ENCODE measurements at regions of chr18 and their contacts with region 1.

Region 1: DNA sequence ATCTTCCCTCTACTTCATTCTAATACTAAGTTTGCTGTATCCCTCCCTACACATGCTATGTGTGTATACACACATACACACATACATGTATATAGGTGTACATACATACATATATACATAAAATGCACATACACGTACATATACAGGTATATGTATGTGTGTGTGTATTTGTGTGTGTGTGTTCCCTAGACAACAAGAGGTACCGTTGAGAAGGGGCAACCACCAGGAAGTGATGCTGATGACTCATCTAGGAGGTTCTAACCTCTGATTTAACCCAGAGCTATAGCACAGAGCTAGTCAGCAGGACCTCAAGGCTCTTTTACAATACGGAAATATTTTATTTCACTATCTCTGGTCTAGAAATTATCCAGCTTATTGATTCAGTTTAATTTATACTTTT is 139.2 kb downstream of the LAMA3 start:
- DNase-seq: peak; percentile 40 to 86
- ATAC-seq: peak; percentile 97 to 99 (median 98)
- H3K4me3 ChIP-seq: no peak overlapping the region
- H3K4me3 Mint-ChIP-seq: peak overlapping the region; percentile 22
- H3K27ac ChIP-seq: peak overlapping the region; percentile 67
- H3K27ac Mint-ChIP-seq: peak overlapping the region in 1 of 2 donors; percentile 90
- H3K4me1 ChIP-seq: no peaks in the 10 kb centered on the region
- H3K4me1 Mint-ChIP-seq: peaks cover 6 to 8% of the 10 kb centered on the region in 2 donors
- H3K27me3 ChIP-seq: no peaks in the 10 kb centered on the region
- H3K27me3 Mint-ChIP-seq: peaks cover 3 to 7% of the 10 kb centered on the region in 2 donors
- CTCF ChIP-seq: no peak

Region 2: DNA sequence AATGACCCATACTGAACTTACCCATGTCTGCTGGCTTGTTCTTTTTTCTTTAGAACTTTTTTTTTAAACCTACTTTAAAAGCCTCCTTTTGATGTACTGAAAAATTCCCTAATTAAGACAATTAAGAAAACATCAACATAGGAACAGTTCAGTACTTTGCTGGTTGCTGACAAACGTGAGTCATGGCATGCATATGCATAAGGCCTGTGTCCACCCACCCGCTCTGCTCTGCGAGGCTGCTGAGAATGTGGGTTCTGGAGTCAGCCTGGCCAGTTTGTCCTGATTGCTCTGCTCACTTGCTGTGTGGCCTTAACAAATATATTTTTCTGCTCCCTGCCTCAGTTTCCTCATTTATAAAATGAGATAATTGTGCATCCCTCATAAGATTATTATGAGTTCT is 111.9 kb before region 1 on chr18:
- intact Hi-C with region 1: no loop called
- DNase-seq: no peak
- ATAC-seq: no peak
- H3K4me3 ChIP-seq: no peak overlapping the region
- H3K4me3 Mint-ChIP-seq: no peak overlapping the region
- H3K27ac ChIP-seq: no peak overlapping the region
- H3K27ac Mint-ChIP-seq: no peak overlapping the region
- H3K4me1 ChIP-seq: peaks cover 6% of the 10 kb centered on the region
- H3K4me1 Mint-ChIP-seq: peaks cover 14% of the 10 kb centered on the region in 2 donors
- H3K27me3 ChIP-seq: no peaks in the 10 kb centered on the region
- H3K27me3 Mint-ChIP-seq: peaks cover under 1 to 6% of the 10 kb centered on the region in 2 donors
- CTCF ChIP-seq: no peak

Region 3: DNA sequence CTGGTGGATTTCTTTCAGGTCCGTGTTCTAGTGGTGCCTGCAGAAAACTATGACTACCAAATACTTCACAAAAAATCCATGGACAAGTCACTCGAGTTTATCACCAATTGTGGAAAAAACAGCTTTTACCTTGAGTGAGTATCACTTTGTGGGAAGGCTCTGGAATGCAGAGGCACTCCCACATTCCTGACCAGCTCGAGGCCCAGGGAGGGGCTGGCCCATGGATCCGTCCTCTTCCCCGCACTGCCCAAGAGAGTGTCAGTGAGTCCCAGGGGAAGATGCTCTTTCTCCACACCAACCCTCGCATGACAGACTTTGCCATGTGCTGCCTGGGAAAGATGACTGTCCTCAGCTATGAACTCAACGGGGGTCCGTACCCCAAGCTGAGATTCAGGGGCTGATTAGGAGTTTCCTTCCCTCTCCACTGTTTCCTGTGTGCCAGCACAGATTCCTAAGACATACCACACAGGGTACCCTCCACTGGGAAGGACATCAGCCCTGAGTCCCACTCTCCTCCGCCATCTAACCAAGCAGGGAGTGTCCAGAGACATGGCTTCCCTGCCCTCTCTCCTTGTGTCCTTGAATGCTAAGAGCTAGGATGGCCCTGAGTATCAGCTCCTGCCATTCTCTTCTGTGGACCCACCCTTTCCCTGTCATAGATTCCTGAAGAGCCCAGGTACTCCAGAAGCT is 16.7 kb after region 1 on chr18:
- intact Hi-C with region 1: no loop called
- DNase-seq: no peak
- ATAC-seq: no peak
- H3K4me3 ChIP-seq: no peak overlapping the region
- H3K4me3 Mint-ChIP-seq: no peak overlapping the region
- H3K27ac ChIP-seq: no peak overlapping the region
- H3K27ac Mint-ChIP-seq: no peak overlapping the region
- H3K4me1 ChIP-seq: no peaks in the 10 kb centered on the region
- H3K4me1 Mint-ChIP-seq: no peaks in the 10 kb centered on the region
- H3K27me3 ChIP-seq: no peaks in the 10 kb centered on the region
- H3K27me3 Mint-ChIP-seq: peaks cover 0 to 12% of the 10 kb centered on the region in 2 donors
- CTCF ChIP-seq: no peak

Region 4: GRCh38 chr18:23861805-23862470 is 33.5 kb after region 1 on chr18:
- intact Hi-C with region 1: loop called (anchors 5 kb)
- DNase-seq: no peak
- ATAC-seq: no peak
- H3K4me3 ChIP-seq: no peak overlapping the region
- H3K4me3 Mint-ChIP-seq: no peak overlapping the region
- H3K27ac ChIP-seq: peak overlapping the region; percentile 31
- H3K27ac Mint-ChIP-seq: peak overlapping the region; percentile 84 to 87
- H3K4me1 ChIP-seq: peaks cover 40% of the 10 kb centered on the region
- H3K4me1 Mint-ChIP-seq: peaks cover 47 to 51% of the 10 kb centered on the region in 2 donors
- H3K27me3 ChIP-seq: no peaks in the 10 kb centered on the region
- H3K27me3 Mint-ChIP-seq: no peaks in the 10 kb centered on the region
- CTCF ChIP-seq: no peak

Region 5: GRCh38 chr18:23871410-23871809 is 43.0 kb after region 1 on chr18:
- intact Hi-C with region 1: loop called (anchors 2 kb)
- DNase-seq: peak; percentile 61 to 89
- ATAC-seq: peak; percentile 96 to 99 (median 98)
- H3K4me3 ChIP-seq: no peak overlapping the region
- H3K4me3 Mint-ChIP-seq: peak overlapping the region; percentile 83
- H3K27ac ChIP-seq: peak overlapping the region; percentile 22
- H3K27ac Mint-ChIP-seq: peak overlapping the region; percentile 88 to 89
- H3K4me1 ChIP-seq: peaks cover 34% of the 10 kb centered on the region
- H3K4me1 Mint-ChIP-seq: peaks cover 42 to 48% of the 10 kb centered on the region in 2 donors
- H3K27me3 ChIP-seq: no peaks in the 10 kb centered on the region
- H3K27me3 Mint-ChIP-seq: peaks cover 0 to 2% of the 10 kb centered on the region in 2 donors
- CTCF ChIP-seq: no peak

Region 6: DNA sequence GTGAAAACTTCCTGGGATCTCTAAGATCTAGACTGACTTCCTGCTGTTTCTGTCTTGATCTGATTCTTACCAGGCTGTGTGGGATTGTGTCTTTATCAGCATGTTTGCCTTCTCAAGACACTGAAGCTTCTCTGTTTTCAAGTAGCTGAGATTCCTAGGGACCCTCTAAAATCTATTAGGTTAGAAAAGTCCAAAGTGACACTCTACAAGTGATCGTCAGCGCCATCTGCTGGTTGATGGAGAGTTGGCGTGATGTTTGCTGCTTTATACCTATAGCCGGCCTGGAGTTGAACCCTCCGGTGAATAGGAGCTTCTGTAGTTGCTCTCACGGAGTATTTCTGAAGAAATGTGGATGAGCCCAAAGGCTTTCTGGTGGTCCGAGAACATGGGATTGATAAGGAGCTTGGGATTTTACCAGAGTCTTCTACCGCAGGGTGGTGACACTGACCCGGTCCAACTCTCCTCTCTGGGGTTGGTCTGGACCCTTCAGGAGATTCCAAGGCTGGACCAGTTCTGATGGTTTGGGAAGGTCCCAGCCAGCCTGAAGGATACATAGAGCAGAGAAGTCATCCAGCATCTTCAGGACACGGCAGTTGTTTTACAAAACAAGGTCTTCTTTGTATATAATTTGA is 90.1 kb after region 1 on chr18:
- intact Hi-C with region 1: loop called (anchors 2 kb)
- DNase-seq: peak; percentile 75 to 90
- ATAC-seq: peak; percentile 72 to 91 (median 87)
- H3K4me3 ChIP-seq: no peak overlapping the region
- H3K4me3 Mint-ChIP-seq: no peak overlapping the region
- H3K27ac ChIP-seq: no peak overlapping the region
- H3K27ac Mint-ChIP-seq: peak overlapping the region; percentile 22 to 75
- H3K4me1 ChIP-seq: peaks cover 6% of the 10 kb centered on the region
- H3K4me1 Mint-ChIP-seq: peaks cover 13 to 17% of the 10 kb centered on the region in 2 donors
- H3K27me3 ChIP-seq: peaks cover 3% of the 10 kb centered on the region
- H3K27me3 Mint-ChIP-seq: peaks cover 15 to 17% of the 10 kb centered on the region in 2 donors
- CTCF ChIP-seq: peak; percentile 93

Measured in natural killer cell (primary cell).